MCF 10A (cell line): ENCODE measurements at regions of chr7 and their contacts with region 1.

Region 1: GRCh38 chr7:74395745-74396311 is 57.9 kb upstream of the GTF2IRD1 start:
- DNase-seq: no peak
- H3K4me3 Mint-ChIP-seq: no peak overlapping the region
- H3K27ac Mint-ChIP-seq: no peak overlapping the region
- H3K4me1 Mint-ChIP-seq: peaks cover 12% of the 10 kb centered on the region
- H3K27me3 Mint-ChIP-seq: no peaks in the 10 kb centered on the region
- CTCF ChIP-seq: no peak

Region 2: GRCh38 chr7:74272305-74273038 is 123.4 kb before region 1 on chr7:
- CTCF ChIA-PET with region 1: interaction called, 12 read pairs
- POLR2A ChIA-PET with region 1: no interaction called
- intact Hi-C with region 1: no loop called
- DNase-seq: peak; percentile 71
- H3K4me3 Mint-ChIP-seq: no peak overlapping the region
- H3K27ac Mint-ChIP-seq: peak overlapping the region; percentile 90
- H3K4me1 Mint-ChIP-seq: peaks cover 14% of the 10 kb centered on the region
- H3K27me3 Mint-ChIP-seq: no peaks in the 10 kb centered on the region
- CTCF ChIP-seq: no peak

Region 3: GRCh38 chr7:74334030-74334429 is 61.8 kb before region 1 on chr7:
- CTCF ChIA-PET with region 1: no interaction called
- POLR2A ChIA-PET with region 1: no interaction called
- intact Hi-C with region 1: no loop called
- DNase-seq: peak; percentile 50
- H3K4me3 Mint-ChIP-seq: no peak overlapping the region
- H3K27ac Mint-ChIP-seq: no peak overlapping the region
- H3K4me1 Mint-ChIP-seq: peaks cover 6% of the 10 kb centered on the region
- H3K27me3 Mint-ChIP-seq: no peaks in the 10 kb centered on the region
- CTCF ChIP-seq: no peak